SK-N-SH (cell line): ENCODE measurements at regions of chr3 and their contacts with region 1.

Region 1: DNA sequence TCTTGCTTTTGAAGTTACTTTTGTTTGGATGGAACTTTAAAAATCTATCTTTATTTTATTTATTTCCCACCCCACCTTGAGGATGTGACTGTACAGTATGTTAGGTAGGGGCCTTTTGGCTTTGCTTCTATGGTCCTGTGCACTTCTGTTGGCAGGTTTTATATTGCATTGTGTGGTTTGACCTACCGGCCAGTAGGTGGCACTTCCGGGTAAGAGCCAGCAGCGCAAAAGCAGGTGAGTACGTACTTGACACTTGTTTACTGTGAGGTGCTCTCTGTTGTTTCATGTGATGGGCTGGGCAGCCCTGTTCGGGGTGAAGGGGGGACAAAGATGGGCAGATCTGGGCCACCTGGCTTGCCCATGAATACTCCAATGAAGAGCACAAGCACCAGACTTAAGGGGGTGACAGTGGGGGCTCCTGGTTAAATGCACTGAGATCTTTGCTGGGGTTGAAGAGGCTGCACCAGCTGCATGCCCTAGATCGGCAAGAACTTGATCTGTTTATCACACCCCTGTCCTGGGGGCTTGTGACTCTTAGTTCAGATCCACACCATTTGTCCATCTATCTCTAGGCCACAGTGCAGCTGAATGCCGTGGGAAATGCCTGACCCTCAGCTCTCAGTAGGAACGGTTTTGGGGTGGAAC is 131.6 kb downstream of the NLGN1 start:
- DNase-seq: peak; percentile 11
- H3K4me3 ChIP-seq: no peak overlapping the region
- H3K27ac ChIP-seq: no peak overlapping the region
- H3K4me1 ChIP-seq: no peaks in the 10 kb centered on the region
- H3K27me3 ChIP-seq: no peaks in the 10 kb centered on the region
- CTCF ChIP-seq: peak; percentile 53
- EP300 ChIP-seq: no peak
- RAD21 ChIP-seq: peak; percentile 59

Region 2: DNA sequence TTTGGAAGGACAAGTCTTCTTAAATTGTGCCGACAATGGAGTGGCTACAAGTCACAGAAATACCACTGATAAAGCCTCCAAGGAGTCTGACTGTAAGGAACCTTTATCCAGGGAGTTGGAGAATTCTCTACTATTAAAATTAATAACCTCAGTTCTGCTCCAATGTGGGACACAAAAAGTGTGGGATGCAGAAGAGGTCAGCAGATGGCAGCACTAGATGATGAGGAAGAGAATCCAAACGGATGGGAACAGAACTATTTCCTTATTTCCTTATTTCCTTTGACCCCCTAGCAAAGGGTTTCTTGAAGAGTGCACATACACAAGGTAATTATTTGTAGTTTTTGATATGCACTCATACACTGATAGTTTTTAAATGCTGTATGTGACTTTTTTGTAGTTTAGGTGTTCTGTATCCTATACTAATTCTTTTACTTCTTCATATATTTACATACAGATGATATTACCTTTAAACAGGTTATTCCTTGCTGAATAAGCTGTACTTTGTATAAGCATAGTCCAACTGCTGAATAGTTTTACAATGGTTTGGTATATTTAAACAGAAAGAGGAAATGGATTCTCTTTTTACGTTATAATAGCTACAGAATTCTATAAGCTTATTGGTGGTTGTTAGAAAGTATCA is 157.2 kb before region 1 on chr3:
- CTCF ChIA-PET with region 1: no interaction called
- POLR2A ChIA-PET with region 1: no interaction called
- DNase-seq: peak; percentile 21
- H3K4me3 ChIP-seq: no peak overlapping the region; a peak in 1 of 4 replicates
- H3K27ac ChIP-seq: no peak overlapping the region
- H3K4me1 ChIP-seq: no peaks in the 10 kb centered on the region
- H3K27me3 ChIP-seq: no peaks in the 10 kb centered on the region; the same call in 1 of the 2 replicates
- CTCF ChIP-seq: peak; percentile 76
- EP300 ChIP-seq: no peak
- RAD21 ChIP-seq: peak; percentile 65

Region 3: DNA sequence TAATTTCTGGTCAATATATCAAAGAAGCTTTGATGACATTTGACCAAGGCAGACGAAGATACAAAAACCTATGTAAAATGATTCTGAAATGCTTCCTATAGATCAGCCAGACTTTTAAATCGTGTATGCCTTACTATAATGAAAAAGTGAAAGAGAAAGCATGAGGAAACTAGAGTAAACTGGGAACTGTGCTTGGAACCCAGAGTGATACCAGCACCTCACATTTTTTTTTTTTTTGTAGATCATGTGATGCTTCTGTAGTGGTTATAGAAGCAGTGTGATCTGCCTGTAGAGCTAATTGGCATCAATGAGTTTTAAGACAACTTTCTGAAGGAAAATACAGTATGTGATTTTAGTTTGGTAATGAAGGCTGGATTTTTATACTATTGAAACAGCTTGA is 19.1 kb after region 1 on chr3:
- CTCF ChIA-PET with region 1: interaction called, 13 read pairs
- POLR2A ChIA-PET with region 1: no interaction called
- DNase-seq: no peak
- H3K4me3 ChIP-seq: no peak overlapping the region
- H3K27ac ChIP-seq: no peak overlapping the region
- H3K4me1 ChIP-seq: no peaks in the 10 kb centered on the region
- H3K27me3 ChIP-seq: no peaks in the 10 kb centered on the region
- CTCF ChIP-seq: no peak
- EP300 ChIP-seq: no peak
- RAD21 ChIP-seq: no peak